OCI-LY7 (cell line): ENCODE measurements at regions of chr11 and their contacts with region 1.

Region 1: DNA sequence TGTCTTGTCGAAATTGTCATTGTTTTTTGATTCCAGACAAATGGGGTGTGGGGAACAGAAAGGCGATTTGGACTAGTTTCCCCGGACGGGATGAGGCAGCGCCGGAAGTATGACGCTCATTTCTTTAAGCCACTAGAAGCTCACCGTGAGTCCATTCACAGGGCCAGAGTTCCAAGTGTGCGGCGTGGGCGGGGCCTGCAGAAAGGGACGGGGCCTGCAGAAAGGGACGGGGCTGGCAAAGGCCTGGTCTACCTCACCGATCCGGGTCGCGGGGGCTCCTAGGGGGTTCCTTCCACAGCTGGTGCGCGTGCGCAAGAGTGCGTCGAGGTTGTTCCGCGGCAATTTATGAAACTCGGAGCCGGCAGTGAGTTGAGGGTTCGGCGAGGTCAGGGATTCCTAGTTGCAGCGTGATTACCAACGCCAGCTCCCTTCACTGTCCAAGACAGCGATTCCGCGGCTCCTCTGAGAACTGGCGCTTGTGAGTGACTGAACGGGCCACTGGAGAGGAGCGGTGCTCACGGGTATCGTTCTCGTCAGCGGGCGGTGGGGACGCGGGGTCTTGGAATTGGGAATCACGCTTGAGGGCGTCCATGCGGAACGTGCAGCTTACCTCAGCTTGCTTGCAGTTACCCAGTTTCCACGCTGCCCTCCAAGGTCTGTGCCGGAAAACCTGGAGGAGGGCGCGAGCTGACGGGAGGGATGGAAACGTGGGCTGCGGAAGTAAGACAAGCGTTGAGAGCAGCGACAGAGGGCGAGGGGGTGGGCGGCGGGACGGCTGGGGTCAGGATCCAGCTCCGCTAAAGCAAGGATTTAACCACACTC is at the start of gene ZNF215:
- DNase-seq: peak; percentile 94
- H3K4me3 ChIP-seq: peak within 1 kb of the TSS; percentile 95
- H3K27ac ChIP-seq: peak within 1 kb of the TSS; percentile 95
- H3K4me1 ChIP-seq: peaks cover 37% of the 10 kb centered on the region
- CTCF ChIP-seq: no peak
- total RNA-seq, gene ZNF215: 59.8 and 67.2 TPM in 2 replicates

Region 2: GRCh38 chr11:6234387-6235107 is 691.9 kb before region 1 on chr11 and contains the start of gene FHIP1B:
- CTCF ChIA-PET with region 1: no interaction called
- POLR2A ChIA-PET with region 1: no interaction called
- intact Hi-C with region 1: loop called (anchors 10 kb)
- DNase-seq: peak; percentile 100
- H3K4me3 ChIP-seq: peak within 1 kb of the TSS; percentile 86
- H3K27ac ChIP-seq: peak within 1 kb of the TSS; percentile 49
- H3K4me1 ChIP-seq: peaks cover 35% of the 10 kb centered on the region
- CTCF ChIP-seq: no peak
- total RNA-seq, gene FHIP1B: 15.7 and 20.1 TPM in 2 replicates

Region 3: GRCh38 chr11:6443269-6444003 is 483.0 kb before region 1 on chr11:
- CTCF ChIA-PET with region 1: no interaction called
- POLR2A ChIA-PET with region 1: no interaction called
- intact Hi-C with region 1: loop called (anchors 5 kb)
- DNase-seq: peak; percentile 77
- H3K4me3 ChIP-seq: no peak overlapping the region
- H3K27ac ChIP-seq: no peak overlapping the region
- H3K4me1 ChIP-seq: peaks cover 36% of the 10 kb centered on the region
- CTCF ChIP-seq: peak; percentile 94

Region 4: DNA sequence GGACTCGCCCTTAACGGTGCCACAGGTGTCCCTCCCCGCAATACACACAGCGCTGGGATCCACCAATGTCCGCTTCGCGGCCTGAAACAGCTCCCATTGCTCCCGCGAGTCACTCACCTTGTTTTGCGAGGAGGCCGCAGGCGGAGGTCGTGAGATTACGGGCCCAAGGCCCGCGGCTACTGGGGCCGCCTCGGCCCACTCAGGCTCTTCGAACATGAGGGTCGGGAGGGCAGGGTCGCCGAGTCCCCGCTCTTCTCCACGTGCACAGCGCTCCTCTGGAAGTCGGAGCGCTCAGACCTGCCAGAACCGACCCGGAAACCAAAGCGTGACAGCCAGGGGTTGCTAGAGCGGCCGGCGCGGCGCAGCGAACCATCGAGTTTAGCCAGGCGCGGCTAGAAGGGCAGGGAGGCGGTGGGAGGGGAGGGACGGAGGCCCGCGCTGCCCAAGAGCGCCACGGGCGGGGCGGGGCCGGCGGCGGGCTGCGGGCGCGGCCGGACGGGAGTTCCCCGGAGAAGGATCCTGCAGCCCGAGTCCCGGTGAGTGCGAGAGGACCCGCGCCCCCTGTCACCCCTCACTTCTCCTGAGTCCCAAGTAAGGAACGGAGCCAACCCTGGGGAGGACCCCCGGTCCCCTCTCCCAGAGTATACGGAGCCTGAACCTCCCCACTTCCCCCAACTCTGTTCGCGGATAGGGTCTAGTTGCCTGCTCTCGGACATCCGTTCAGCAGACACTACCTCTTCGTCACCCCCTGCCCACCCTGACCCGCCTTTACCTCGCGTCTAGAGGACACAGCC is 322.9 kb before region 1 on chr11 and contains the starts of genes ILK and RRP8:
- CTCF ChIA-PET with region 1: no interaction called
- POLR2A ChIA-PET with region 1: no interaction called
- intact Hi-C with region 1: loop called (anchors 5 kb)
- DNase-seq: peak; percentile 90
- H3K4me3 ChIP-seq: peak within 1 kb of the TSS; percentile 91
- H3K27ac ChIP-seq: peak within 1 kb of the TSS; percentile 67
- H3K4me1 ChIP-seq: peaks cover 47% of the 10 kb centered on the region
- CTCF ChIP-seq: 0 out of 2 replicates have a peak, but pooled peaks have one; percentile 18
- total RNA-seq, gene ILK: 52.0 and 64.8 TPM in 2 replicates
- total RNA-seq, gene RRP8: 26.4 and 29.4 TPM in 2 replicates

Region 5: GRCh38 chr11:6635082-6635932 is 291.1 kb before region 1 on chr11:
- CTCF ChIA-PET with region 1: no interaction called
- POLR2A ChIA-PET with region 1: no interaction called
- intact Hi-C with region 1: no loop called
- DNase-seq: no peak
- H3K4me3 ChIP-seq: no peak overlapping the region
- H3K27ac ChIP-seq: no peak overlapping the region
- H3K4me1 ChIP-seq: no peaks in the 10 kb centered on the region
- CTCF ChIP-seq: no peak

Region 6: GRCh38 chr11:6995703-6996102 is 69.3 kb after region 1 on chr11:
- CTCF ChIA-PET with region 1: no interaction called
- POLR2A ChIA-PET with region 1: no interaction called
- intact Hi-C with region 1: no loop called
- DNase-seq: no peak
- H3K4me3 ChIP-seq: no peak overlapping the region
- H3K27ac ChIP-seq: no peak overlapping the region
- H3K4me1 ChIP-seq: peaks cover 18% of the 10 kb centered on the region
- CTCF ChIP-seq: no peak